Heart right ventricle (tissue), 16 donors: ENCODE measurements at regions of chr16 and their contacts with region 1.

Region 1: DNA sequence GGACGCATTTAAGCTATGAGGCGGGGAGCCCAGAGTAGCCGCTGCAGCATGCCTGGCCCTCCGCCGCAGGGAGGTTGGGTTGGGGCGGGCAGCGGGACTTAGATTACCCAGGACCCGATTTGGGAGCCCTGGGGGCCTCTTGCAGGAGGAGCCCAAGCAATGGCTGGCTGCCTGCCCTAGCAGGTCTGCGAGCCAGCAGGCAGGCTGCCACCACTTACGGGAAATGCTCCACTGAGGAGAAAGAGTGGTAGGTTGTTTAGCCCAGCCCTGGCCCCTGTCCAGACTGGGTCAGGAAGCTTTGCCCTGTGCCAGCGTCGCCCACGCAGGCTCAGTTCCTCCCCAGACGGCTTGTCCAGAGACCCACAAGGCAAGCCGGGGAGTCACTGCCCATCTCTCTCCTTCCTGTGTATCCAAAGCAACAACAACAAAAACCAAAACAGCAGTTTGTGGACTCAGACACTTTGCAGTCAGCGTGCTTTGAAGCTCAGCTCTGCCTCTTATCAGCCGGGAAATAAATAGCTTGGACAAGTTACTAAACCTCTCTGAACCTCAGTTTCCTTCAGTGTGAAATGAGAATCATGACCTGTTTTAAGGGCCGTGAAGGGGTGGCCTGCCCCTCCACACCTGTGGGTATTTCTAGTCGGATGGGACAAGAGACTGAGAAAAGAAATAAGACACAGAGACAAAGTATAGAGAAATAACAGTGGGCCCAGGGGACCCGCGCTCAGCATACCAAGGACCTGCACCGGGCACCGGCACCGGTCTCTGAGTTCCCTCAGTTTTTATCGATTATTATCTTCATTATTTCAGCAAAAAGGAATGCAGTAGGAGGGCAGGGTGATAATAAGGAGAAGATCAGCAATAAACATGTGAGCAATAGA is 10.5 kb upstream of the TVP23A start:
- DNase-seq: peak; percentile 93 to 96
- ATAC-seq: peak; percentile 76 to 94 (median 85)
- H3K4me3 ChIP-seq: peak overlapping the region in 4 of 10 donors; percentile 1 to 14 (median 4)
- H3K27ac ChIP-seq: peak overlapping the region; percentile 93 to 100 (median 95)
- H3K4me1 ChIP-seq: peaks cover 18 to 53% (median 39%) of the 10 kb centered on the region in 9 donors
- H3K27me3 ChIP-seq: no peaks in the 10 kb centered on the region
- CTCF ChIP-seq: no peak

Region 2: DNA sequence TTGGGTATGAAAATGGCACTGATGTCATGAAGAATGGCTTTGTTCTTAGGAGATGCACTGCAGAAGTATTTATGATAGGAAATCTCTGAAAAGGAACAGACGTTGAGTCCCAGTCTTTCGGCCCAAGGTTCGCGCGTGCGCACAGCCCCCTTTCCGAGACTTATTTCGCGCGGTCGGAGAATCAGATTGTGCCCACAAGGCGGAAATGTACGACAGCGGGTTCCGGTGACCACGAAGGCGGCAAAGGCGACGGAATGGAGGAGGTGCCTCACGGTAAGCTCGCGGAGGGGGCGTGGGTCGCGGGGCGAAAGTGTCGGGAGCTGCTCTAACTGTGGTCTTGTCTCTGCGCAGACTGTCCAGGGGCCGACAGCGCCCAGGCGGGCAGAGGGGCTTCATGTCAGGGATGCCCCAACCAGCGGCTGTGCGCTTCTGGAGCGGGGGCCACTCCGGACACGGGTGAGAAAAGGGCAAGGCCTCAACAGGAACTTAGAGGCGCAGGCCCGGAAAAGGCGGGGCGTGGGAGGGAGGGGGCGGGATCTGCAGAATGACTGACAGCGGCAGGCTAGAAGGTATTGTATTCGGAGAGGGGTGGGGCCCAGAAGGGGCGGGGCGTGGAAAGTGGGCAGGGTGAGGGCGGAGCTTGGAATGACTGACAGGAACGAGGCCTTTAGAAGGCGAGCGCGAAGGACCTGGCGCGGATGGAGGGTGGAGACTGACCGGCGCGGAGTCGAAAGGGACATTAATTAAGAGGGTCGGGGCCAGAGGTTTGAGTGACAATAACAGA is 85.3 kb before region 1 on chr16 and contains the start of gene NUBP1:
- intact Hi-C with region 1: loop called in 5 of 10 experiments (anchors 1 to 5 kb)
- DNase-seq: peak; percentile 100
- ATAC-seq: peak; percentile 95 to 98 (median 97)
- H3K4me3 ChIP-seq: peak within 1 kb of the TSS in 9 of 10 donors; percentile 43 to 69 (median 60)
- H3K27ac ChIP-seq: peak within 1 kb of the TSS; percentile 94 to 99 (median 97)
- H3K4me1 ChIP-seq: peaks cover 7 to 49% (median 37%) of the 10 kb centered on the region in 9 donors
- H3K27me3 ChIP-seq: no peaks in the 10 kb centered on the region
- CTCF ChIP-seq: no peak
- total RNA-seq, gene NUBP1: 44.1 to 57.1 (median 50.3) TPM

Region 3: DNA sequence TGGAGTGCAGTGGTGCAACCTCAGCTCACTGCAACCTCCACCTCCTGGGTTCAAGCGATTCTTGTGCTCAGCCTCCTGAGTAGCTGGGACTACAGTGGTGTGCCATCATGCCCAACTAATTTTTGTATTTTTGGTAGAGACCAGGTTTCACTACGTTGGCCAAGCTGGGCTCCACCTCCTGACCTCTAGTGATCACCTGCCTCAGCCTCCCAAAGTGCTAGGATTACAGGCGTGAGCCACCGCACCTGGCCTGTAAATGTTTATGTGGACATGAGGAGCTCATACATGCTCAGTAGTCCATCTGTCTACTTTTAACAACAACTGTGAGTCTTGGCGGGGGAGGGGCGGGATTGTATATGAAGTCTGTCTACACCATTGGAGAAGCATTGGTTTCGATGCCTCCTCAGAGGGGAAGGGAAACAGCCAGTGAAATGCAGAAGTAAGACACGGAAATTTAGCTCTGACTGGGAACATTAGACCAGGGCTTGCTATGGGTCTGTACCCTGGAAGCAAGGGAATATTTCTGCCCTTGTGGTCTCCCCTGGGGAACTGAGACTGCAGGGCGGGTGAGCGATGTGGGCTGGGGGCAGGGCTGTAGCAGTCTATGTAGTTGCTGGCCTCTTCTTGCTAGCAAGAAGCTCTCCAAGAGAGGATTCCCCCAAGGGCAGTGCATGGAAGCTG is 76.1 kb before region 1 on chr16:
- intact Hi-C with region 1: loop called in 3 of 10 experiments (anchors 5 to 10 kb)
- DNase-seq: peak; percentile 49 to 67
- ATAC-seq: peak in 6 of 8 donors; percentile 16 to 53 (median 48)
- H3K4me3 ChIP-seq: no peak overlapping the region
- H3K27ac ChIP-seq: peak overlapping the region in 3 of 10 donors; percentile 1 to 78 (median 15)
- H3K4me1 ChIP-seq: peaks cover 0 to 65% (median 22%) of the 10 kb centered on the region in 9 donors
- H3K27me3 ChIP-seq: no peaks in the 10 kb centered on the region
- CTCF ChIP-seq: no peak

Region 4: GRCh38 chr16:10871149-10871991 is 42.3 kb after region 1 on chr16:
- intact Hi-C with region 1: loop called in 5 of 10 experiments (anchors 5 kb)
- DNase-seq: peak; percentile 24 to 40
- ATAC-seq: peak; percentile 30 to 76 (median 66)
- H3K4me3 ChIP-seq: peak overlapping the region in 1 of 10 donors; percentile 16
- H3K27ac ChIP-seq: peak overlapping the region in 9 of 10 donors; percentile 27 to 90 (median 65)
- H3K4me1 ChIP-seq: peaks cover 0 to 75% (median 49%) of the 10 kb centered on the region in 9 donors
- H3K27me3 ChIP-seq: peaks cover 0 to 16% (median 0%) of the 10 kb centered on the region in 7 donors
- CTCF ChIP-seq: no peak

Region 5: GRCh38 chr16:10876799-10877341 is 47.8 kb after region 1 on chr16 and contains the start of gene CIITA:
- intact Hi-C with region 1: loop called in 4 of 10 experiments (anchors 5 kb)
- DNase-seq: peak; percentile 65 to 73
- ATAC-seq: peak in 7 of 8 donors; percentile 33 to 59 (median 51)
- H3K4me3 ChIP-seq: peak within 1 kb of the TSS in 6 of 10 donors; percentile 71 to 80 (median 73)
- H3K27ac ChIP-seq: peak within 1 kb of the TSS in 6 of 10 donors; percentile 20 to 88 (median 76)
- H3K4me1 ChIP-seq: peaks cover 4 to 69% (median 22%) of the 10 kb centered on the region in 9 donors
- H3K27me3 ChIP-seq: peaks cover 0 to 39% (median 20%) of the 10 kb centered on the region in 7 donors
- CTCF ChIP-seq: no peak
- total RNA-seq, gene CIITA: 5.1 to 50.8 (median 8.7) TPM

Region 6: DNA sequence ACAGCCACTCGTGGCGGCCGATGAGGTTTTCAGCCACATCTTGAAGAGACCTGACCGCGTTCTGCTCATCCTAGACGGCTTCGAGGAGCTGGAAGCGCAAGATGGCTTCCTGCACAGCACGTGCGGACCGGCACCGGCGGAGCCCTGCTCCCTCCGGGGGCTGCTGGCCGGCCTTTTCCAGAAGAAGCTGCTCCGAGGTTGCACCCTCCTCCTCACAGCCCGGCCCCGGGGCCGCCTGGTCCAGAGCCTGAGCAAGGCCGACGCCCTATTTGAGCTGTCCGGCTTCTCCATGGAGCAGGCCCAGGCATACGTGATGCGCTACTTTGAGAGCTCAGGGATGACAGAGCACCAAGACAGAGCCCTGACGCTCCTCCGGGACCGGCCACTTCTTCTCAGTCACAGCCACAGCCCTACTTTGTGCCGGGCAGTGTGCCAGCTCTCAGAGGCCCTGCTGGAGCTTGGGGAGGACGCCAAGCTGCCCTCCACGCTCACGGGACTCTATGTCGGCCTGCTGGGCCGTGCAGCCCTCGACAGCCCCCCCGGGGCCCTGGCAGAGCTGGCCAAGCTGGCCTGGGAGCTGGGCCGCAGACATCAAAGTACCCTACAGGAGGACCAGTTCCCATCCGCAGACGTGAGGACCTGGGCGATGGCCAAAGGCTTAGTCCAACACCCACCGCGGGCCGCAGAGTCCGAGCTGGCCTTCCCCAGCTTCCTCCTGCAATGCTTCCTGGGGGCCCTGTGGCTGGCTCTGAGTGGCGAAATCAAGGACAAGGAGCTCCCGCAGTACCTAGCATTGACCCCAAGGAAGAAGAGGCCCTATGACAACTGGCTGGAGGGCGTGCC is 78.0 kb after region 1 on chr16:
- intact Hi-C with region 1: no loop called
- DNase-seq: peak; percentile 40 to 70
- ATAC-seq: peak; percentile 46 to 85 (median 82)
- H3K4me3 ChIP-seq: no peak overlapping the region
- H3K27ac ChIP-seq: peak overlapping the region in 1 of 10 donors; percentile 15
- H3K4me1 ChIP-seq: peaks cover 0 to 9% (median 0%) of the 10 kb centered on the region in 9 donors
- H3K27me3 ChIP-seq: no peaks in the 10 kb centered on the region
- CTCF ChIP-seq: no peak

Region 7: GRCh38 chr16:10944249-10945064 is 115.4 kb after region 1 on chr16 and contains the start of gene CLEC16A:
- intact Hi-C with region 1: loop called in 1 of 10 experiments (anchors 5 kb)
- DNase-seq: peak; percentile 98 to 99
- ATAC-seq: peak; percentile 84 to 92 (median 87)
- H3K4me3 ChIP-seq: peak within 1 kb of the TSS; percentile 62 to 97 (median 84)
- H3K27ac ChIP-seq: peak within 1 kb of the TSS; percentile 13 to 90 (median 82)
- H3K4me1 ChIP-seq: peaks cover 17 to 69% (median 53%) of the 10 kb centered on the region in 9 donors
- H3K27me3 ChIP-seq: no peaks in the 10 kb centered on the region
- CTCF ChIP-seq: peak in 2 of 9 donors; percentile 16 to 18
- total RNA-seq, gene CLEC16A: 17.2 to 30.8 (median 23.2) TPM